ENCODE measurements at regions of chr3 and their contacts with region 1.

Region 1: DNA sequence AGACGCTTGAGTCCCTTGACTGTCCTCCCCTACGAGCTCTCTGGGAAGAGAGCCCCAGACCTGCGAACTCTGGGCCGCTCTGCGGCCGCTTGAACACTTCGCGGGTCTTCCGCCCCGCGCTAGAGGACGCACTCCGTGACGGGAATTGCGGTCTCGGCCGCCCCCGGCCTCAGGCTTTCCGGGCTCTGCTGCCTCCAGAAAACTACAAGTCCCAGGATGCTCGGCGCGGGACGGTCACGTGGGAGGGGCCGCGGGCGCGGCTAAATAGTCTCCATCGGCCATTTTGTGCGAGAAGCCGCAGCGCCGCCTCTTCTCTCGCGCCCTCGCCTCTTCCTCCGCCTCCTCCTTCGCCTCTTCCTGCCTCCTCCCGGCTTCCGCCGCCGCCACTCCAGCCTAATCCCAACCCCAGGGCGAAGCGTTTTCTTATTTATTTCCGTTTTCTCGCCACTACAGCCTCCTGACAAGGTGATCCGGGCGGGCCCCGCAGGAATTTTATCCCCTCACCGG is at the start of gene EIF1B:
- DNase-seq: peak; percentile 97
- H3K4me3 Mint-ChIP-seq: peak within 1 kb of the TSS; percentile 99
- H3K27ac Mint-ChIP-seq: peak within 1 kb of the TSS; percentile 95
- H3K4me1 Mint-ChIP-seq: peaks cover 6% of the 10 kb centered on the region
- H3K27me3 Mint-ChIP-seq: no peaks in the 10 kb centered on the region
- CTCF ChIP-seq: peak; percentile 81
- total RNA-seq, gene EIF1B: 69.3 and 87.2 TPM in 2 replicates

Region 2: DNA sequence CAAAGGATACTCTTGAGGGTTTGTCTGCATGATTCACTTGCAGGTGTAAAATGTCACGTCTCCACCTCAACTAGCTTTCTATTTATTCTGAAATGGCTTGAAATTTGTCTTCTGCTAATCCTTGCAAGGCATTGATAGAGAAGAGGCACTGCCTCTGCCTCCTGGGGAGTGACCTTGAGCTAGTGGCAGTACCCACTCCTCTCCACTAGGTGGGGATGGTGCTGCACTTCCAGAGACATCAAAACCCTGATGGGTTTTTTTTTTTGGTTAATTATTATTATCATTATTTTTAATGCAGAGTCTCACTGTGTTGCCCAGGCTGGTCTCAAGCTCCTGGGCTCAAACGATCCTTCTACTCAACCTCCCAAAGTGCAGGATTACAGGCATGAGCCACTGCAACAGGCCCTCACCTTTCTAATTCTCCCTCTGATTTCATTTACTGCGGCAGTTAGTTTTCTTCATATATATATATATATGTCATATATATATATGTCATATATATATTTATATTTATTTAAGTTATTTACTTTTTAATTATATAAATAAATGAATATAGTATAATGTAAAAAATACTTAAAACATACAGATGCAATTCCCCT is 117.5 kb before region 1 on chr3:
- CTCF ChIA-PET with region 1: interaction called, 452 read pairs
- POLR2A ChIA-PET with region 1: interaction called, 16 read pairs
- intact Hi-C with region 1: no loop called
- DNase-seq: peak; percentile 65
- H3K4me3 Mint-ChIP-seq: no peak overlapping the region
- H3K27ac Mint-ChIP-seq: no peak overlapping the region
- H3K4me1 Mint-ChIP-seq: peaks cover 4% of the 10 kb centered on the region
- H3K27me3 Mint-ChIP-seq: no peaks in the 10 kb centered on the region
- CTCF ChIP-seq: peak; percentile 96

Region 3: GRCh38 chr3:40258555-40258954 is 50.9 kb before region 1 on chr3:
- CTCF ChIA-PET with region 1: interaction called, 5 read pairs
- POLR2A ChIA-PET with region 1: interaction called, 3 read pairs
- intact Hi-C with region 1: loop called (anchors 5 kb)
- DNase-seq: peak; percentile 87
- H3K4me3 Mint-ChIP-seq: no peak overlapping the region
- H3K27ac Mint-ChIP-seq: peak overlapping the region; percentile 70
- H3K4me1 Mint-ChIP-seq: no peaks in the 10 kb centered on the region
- H3K27me3 Mint-ChIP-seq: no peaks in the 10 kb centered on the region
- CTCF ChIP-seq: no peak